ENCODE measurements at regions of chr21 and their contacts with region 1.

Region 1: GRCh38 chr21:39313571-39314142 is at the start of gene BRWD1:
- DNase-seq: peak; percentile 84
- ATAC-seq: peak; percentile 77 to 90 (median 84)
- H3K4me3 ChIP-seq: peak within 1 kb of the TSS; percentile 64 to 97 (median 82)
- H3K27ac ChIP-seq: peak within 1 kb of the TSS; percentile 94 to 100 (median 99)
- H3K4me1 ChIP-seq: peaks cover 4 to 41% (median 21%) of the 10 kb centered on the region in 9 donors
- H3K27me3 ChIP-seq: no peaks in the 10 kb centered on the region
- CTCF ChIP-seq: peak in 7 of 9 donors; percentile 44 to 68 (median 55)
- total RNA-seq, gene BRWD1: 30.2 to 38.8 (median 34.6) TPM

Region 2: DNA sequence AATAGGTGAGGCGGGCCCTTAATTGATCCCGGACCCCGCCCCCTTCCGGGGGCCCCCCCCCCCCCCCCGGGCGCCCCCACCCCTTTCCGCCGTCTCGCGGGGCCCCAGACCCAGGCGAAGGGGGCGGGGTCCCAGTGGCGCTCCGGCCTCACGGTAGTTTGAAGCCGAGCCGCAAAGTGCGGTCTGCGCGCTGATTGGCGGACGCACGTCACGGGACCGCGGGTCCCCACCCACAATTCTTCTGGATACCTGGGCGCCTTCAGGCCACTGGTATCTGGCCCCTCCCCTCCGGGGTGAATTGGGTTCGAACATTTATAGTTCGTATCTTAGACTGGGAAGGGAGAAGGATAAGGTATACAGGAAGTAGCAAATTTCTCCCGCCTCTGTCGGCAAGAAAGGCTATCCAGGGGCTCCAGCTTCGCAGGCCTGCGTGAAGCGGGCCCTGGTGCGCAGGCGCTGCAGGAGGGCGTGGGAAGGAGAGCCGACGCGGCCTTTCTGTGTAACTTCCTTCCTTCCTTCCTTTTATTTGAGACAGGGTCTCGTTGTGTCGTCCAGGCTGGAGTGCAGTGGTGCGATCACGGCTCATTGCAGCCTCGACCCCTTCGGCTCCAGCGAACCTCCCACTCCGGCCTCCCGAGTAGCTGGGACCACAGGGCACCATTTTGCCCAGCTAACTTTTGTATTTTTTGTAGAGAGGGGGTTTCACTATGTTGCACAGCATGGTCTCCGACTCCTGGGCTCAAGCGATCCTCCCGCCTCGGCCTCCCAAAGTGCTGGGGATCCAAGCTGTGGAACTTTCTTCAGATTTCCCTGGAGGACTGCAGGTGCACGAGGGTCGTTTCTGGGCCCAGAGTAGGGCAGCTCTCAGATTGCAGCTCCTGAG is 35.8 kb after region 1 on chr21:
- intact Hi-C with region 1: loop called in 8 of 10 experiments (anchors 1 to 5 kb)
- DNase-seq: peak; percentile 94 to 95
- ATAC-seq: peak; percentile 94 to 98 (median 97)
- H3K4me3 ChIP-seq: peak overlapping the region; percentile 53 to 90 (median 78)
- H3K27ac ChIP-seq: peak overlapping the region; percentile 83 to 99 (median 93)
- H3K4me1 ChIP-seq: peaks cover 2 to 44% (median 32%) of the 10 kb centered on the region in 9 donors
- H3K27me3 ChIP-seq: no peaks in the 10 kb centered on the region
- CTCF ChIP-seq: no peak

Region 3: DNA sequence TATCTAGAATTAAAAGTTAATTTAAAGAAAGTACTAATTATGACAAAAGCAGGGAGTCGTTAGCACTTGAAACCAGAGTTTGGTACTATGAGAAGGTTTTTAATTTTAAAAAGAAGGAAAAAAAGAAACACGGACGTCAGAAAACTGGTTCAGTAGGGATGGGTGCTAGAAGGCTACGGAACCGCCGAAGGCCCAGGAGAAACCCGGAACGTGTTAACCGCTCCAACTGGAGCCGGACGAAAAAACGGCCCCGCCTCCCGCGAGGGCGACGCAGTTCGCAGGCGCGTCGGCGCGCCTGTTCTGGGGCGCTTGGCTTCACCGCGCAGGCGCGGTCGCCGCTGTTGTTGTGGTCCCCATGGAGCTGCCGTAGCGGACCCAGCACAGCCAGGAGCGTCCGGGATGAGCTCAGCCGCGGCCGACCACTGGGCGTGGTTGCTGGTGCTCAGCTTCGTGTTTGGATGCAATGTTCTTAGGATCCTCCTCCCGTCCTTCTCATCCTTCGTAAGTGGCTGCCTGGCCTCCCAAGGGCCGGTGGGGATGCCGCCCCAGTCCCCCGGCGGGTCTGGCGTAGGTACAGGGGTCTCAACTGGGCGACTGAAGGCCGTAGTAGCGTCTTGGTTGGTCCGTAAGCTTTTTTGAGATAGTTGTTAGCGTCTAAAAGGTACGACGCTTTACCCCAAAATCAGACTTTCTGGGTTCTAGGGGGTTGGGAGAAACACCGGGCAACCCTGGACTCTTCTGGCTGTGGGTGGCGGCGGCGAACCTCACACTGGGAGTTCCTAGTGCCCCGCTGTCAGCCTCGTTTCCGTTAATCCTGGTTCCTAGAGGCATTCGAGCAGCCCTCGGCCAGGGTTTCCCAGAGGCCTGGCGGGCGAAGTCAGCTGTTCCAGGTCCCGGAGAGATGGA is 66.6 kb after region 1 on chr21:
- intact Hi-C with region 1: loop called in 5 of 10 experiments (anchors 5 to 10 kb)
- DNase-seq: peak; percentile 95 to 98
- ATAC-seq: peak; percentile 99 to 100 (median 99)
- H3K4me3 ChIP-seq: peak overlapping the region; percentile 63 to 95 (median 76)
- H3K27ac ChIP-seq: peak overlapping the region; percentile 38 to 94 (median 90)
- H3K4me1 ChIP-seq: peaks cover 3 to 29% (median 15%) of the 10 kb centered on the region in 9 donors
- H3K27me3 ChIP-seq: no peaks in the 10 kb centered on the region
- CTCF ChIP-seq: no peak

Region 4: DNA sequence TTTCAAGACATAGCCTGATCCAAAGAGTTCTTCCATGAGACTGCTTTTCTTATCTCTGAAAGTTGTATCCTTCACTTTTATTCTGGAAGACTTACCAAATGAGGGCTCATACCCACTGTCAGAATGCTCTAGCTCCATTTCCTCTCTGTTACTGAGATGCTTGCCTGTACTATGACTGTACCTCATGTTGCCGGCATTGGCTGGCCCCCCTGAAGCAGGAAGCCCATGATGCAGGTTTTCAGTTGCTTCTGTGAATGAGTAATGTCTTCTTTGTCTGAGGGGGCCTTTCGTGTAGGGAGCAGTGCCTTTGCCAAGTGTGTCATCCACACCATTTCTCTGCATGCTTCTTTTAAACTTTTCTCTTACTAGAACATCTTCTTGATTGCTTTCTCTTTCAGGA is 92.4 kb after region 1 on chr21:
- intact Hi-C with region 1: no loop called
- DNase-seq: no peak
- ATAC-seq: no peak
- H3K4me3 ChIP-seq: no peak overlapping the region
- H3K27ac ChIP-seq: no peak overlapping the region
- H3K4me1 ChIP-seq: no peaks in the 10 kb centered on the region
- H3K27me3 ChIP-seq: no peaks in the 10 kb centered on the region
- CTCF ChIP-seq: no peak

Region 5: GRCh38 chr21:39445321-39446269 is 131.9 kb after region 1 on chr21 and contains the start of gene LCA5L:
- intact Hi-C with region 1: loop called in 2 of 10 experiments (anchors 10 kb)
- DNase-seq: peak; percentile 90 to 96
- ATAC-seq: peak; percentile 94 to 96 (median 94)
- H3K4me3 ChIP-seq: peak within 1 kb of the TSS; percentile 66 to 96 (median 89)
- H3K27ac ChIP-seq: peak within 1 kb of the TSS; percentile 68 to 97 (median 94)
- H3K4me1 ChIP-seq: peaks cover 4 to 24% (median 15%) of the 10 kb centered on the region in 9 donors
- H3K27me3 ChIP-seq: no peaks in the 10 kb centered on the region
- CTCF ChIP-seq: peak in 3 of 9 donors; percentile 20 to 36 (median 25)
- total RNA-seq, gene LCA5L: 0.21 to 2.1 (median 0.78) TPM

Measured in heart right ventricle (tissue), 16 donors.